Cardiac septum (tissue), 1 donor: ENCODE measurements at regions of chr6 and their contacts with region 1.

Region 1: GRCh38 chr6:41367700-41368099 is 32.3 kb downstream of the NCR2 start:
- DNase-seq: peak; percentile 74

Region 2: DNA sequence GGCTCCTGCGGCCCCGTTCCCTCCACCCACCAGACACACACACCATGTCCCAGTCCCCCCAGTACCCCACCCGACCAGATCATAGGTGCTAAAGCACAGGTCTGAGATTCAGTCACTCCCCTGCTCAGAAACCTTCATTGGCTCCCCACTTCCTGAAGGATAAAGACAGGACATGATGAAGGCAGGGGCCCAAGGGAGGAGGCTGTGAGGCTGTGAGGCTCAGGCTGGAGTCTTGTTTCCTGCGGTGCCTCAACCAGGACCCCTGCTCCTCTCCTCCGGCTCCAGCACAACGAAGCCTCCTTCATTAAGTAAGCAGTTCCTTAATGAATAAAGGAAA is 48.8 kb after region 1 on chr6:
- intact Hi-C with region 1: loop called (anchors 5 kb)
- DNase-seq: no peak

Region 3: GRCh38 chr6:41449399-41450245 is 81.9 kb after region 1 on chr6:
- intact Hi-C with region 1: loop called (anchors 2 kb)
- DNase-seq: no peak

Region 4: DNA sequence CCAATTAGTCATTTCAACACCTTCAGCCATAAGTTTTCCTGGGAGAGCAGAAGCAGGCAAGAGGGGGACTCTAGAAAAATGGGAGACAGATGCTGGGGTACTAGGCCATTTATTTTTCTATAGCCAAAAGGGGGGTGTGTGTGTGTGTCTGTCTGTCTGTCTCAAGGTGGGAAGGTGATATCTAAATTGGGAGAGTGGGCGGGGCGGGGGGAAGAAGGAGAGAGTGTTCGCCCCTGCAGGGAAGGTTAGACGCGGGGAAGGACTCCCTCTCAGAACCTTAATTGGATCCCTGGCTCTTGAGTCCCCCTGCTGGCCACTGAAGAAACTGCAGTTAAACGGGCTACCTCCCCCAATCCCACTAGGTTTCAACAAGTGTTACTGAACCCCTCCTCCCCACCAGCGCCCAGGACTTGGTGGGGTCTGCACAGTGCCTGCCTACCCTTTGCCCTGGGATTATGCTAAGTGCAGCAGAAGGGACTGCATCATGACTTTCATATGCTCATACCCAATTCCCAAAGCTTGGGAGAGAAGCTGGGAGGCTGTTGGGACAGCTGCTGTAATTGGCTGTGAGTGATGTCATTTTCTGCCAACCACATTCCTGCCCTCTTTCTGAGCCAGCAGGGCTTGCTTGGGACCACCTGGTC is 224.3 kb after region 1 on chr6:
- intact Hi-C with region 1: loop called (anchors 1 kb)
- DNase-seq: no peak

Region 5: DNA sequence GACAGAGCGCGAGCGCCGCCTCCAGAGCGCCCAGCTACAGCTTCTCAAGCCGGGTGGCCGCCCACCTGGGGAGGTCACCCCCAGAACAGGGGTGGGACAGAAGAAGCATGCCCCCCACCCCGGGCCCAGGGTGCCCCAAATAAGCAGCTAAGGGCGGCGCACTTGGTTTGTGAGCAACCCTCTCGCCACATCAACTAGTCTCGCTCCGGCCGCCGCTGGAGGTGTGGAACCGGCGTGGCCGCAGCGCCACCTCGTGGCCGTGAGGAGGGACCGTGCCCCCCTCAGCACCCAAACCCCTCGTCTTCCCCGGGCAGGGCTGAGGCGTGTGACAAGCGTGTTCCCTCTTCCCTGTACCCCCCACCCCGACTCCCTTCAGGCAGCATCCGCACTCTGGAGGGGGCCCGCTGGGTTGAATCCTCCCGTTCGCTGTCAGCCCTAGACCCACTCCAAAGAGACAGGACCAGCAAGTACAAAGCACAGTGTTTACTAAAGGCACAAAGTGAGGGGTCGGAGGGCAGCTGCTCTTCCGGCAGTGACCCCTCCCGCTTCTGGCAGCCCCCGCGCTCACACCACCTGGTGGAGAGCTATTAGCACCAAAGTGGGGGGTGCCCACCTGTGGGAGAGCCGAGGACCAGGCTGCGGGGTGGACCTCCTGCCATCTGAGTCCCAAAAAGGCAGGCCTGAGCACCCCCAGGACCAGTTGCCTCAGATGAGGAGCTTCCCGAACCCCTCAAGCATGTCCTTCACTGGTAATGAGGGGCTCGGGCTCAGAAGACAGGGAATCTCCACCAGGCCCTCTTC is 316.0 kb after region 1 on chr6:
- intact Hi-C with region 1: loop called (anchors 1 kb)
- DNase-seq: peak; percentile 90